ENCODE measurements at regions of chr12 and their contacts with region 1.

Region 1: GRCh38 chr12:71754461-71755145 is at the start of gene RAB21:
- DNase-seq: peak; percentile 92
- H3K4me3 ChIP-seq: peak within 1 kb of the TSS; percentile 73 to 92 (median 84)
- H3K27ac ChIP-seq: peak within 1 kb of the TSS; percentile 93 to 100 (median 99)
- H3K4me1 ChIP-seq: peaks cover 0 to 46% (median 13%) of the 10 kb centered on the region in 3 donors
- H3K27me3 ChIP-seq: no peaks in the 10 kb centered on the region
- CTCF ChIP-seq: peak in 5 of 6 experiments; percentile 26 to 60 (median 40)
- POLR2A ChIP-seq: peak in 3 of 4 donors; percentile 68 to 94 (median 89)
- total RNA-seq, gene RAB21: 16.0 to 42.6 (median 30.8) TPM

Region 2: GRCh38 chr12:71663561-71664294 is 90.9 kb before region 1 on chr12 and contains the start of gene ZFC3H1:
- intact Hi-C with region 1: loop called (anchors 10 kb)
- DNase-seq: peak; percentile 85
- H3K4me3 ChIP-seq: peak within 1 kb of the TSS; percentile 68 to 94 (median 82)
- H3K27ac ChIP-seq: peak within 1 kb of the TSS; percentile 94 to 98 (median 97)
- H3K4me1 ChIP-seq: peaks cover 0 to 47% (median 22%) of the 10 kb centered on the region in 3 donors
- H3K27me3 ChIP-seq: no peaks in the 10 kb centered on the region
- CTCF ChIP-seq: peak in 2 of 6 experiments; percentile 17 to 19
- POLR2A ChIP-seq: peak in 3 of 4 donors; percentile 93 to 97 (median 97)
- total RNA-seq, gene ZFC3H1: 17.7 to 60.8 (median 52.2) TPM

Region 3: GRCh38 chr12:71685914-71686665 is 68.5 kb before region 1 on chr12 and contains the start of gene TMEM19:
- intact Hi-C with region 1: loop called (anchors 5 kb)
- DNase-seq: peak; percentile 38
- H3K4me3 ChIP-seq: peak within 1 kb of the TSS; percentile 51 to 77 (median 72)
- H3K27ac ChIP-seq: peak within 1 kb of the TSS; percentile 89 to 96 (median 92)
- H3K4me1 ChIP-seq: peaks cover 14 to 58% (median 23%) of the 10 kb centered on the region in 3 donors
- H3K27me3 ChIP-seq: no peaks in the 10 kb centered on the region
- CTCF ChIP-seq: peak; percentile 13 to 38 (median 26)
- POLR2A ChIP-seq: peak in 3 of 4 donors; percentile 33 to 76 (median 46)
- total RNA-seq, gene TMEM19: 48.2 to 94.5 (median 68.4) TPM

Region 4: GRCh38 chr12:71900091-71900490 is 145.5 kb after region 1 on chr12:
- intact Hi-C with region 1: no loop called
- DNase-seq: no peak
- H3K4me3 ChIP-seq: no peak overlapping the region
- H3K27ac ChIP-seq: no peak overlapping the region
- H3K4me1 ChIP-seq: no peaks in the 10 kb centered on the region
- H3K27me3 ChIP-seq: no peaks in the 10 kb centered on the region
- CTCF ChIP-seq: no peak
- POLR2A ChIP-seq: no peak

Measured in esophagus squamous epithelium (tissue), 5 donors.